PC-9 (cell line): ENCODE measurements at regions of chr10 and their contacts with region 1.

Region 1: GRCh38 chr10:77173615-77174461 is 463.8 kb downstream of the KCNMA1 start:
- DNase-seq: peak; percentile 63 to 71
- H3K4me3 ChIP-seq: no peak overlapping the region
- H3K27ac ChIP-seq: no peak overlapping the region
- H3K4me1 ChIP-seq: peaks cover 6% of the 10 kb centered on the region
- H3K27me3 ChIP-seq: no peaks in the 10 kb centered on the region
- CTCF ChIP-seq: peak; percentile 98

Region 2: GRCh38 chr10:77131214-77131613 is 42.6 kb before region 1 on chr10:
- CTCF ChIA-PET with region 1: no interaction called
- POLR2A ChIA-PET with region 1: no interaction called
- intact Hi-C with region 1: no loop called
- DNase-seq: no peak
- H3K4me3 ChIP-seq: no peak overlapping the region
- H3K27ac ChIP-seq: no peak overlapping the region
- H3K4me1 ChIP-seq: no peaks in the 10 kb centered on the region
- H3K27me3 ChIP-seq: no peaks in the 10 kb centered on the region
- CTCF ChIP-seq: no peak

Region 3: GRCh38 chr10:77251297-77252013 is 77.6 kb after region 1 on chr10:
- CTCF ChIA-PET with region 1: interaction called, 3 read pairs
- POLR2A ChIA-PET with region 1: no interaction called
- intact Hi-C with region 1: loop called (anchors 10 kb)
- DNase-seq: peak; percentile 29 to 34
- H3K4me3 ChIP-seq: no peak overlapping the region
- H3K27ac ChIP-seq: no peak overlapping the region
- H3K4me1 ChIP-seq: no peaks in the 10 kb centered on the region; the same call in 1 of the 2 replicates
- H3K27me3 ChIP-seq: no peaks in the 10 kb centered on the region
- CTCF ChIP-seq: peak; percentile 79